ENCODE measurements at regions of chr22 and their contacts with region 1.

Region 1: GRCh38 chr22:26679003-26679629 is 21.7 kb downstream of the MIAT start:
- DNase-seq: peak; percentile 81
- CTCF ChIP-seq: peak; percentile 95

Region 2: DNA sequence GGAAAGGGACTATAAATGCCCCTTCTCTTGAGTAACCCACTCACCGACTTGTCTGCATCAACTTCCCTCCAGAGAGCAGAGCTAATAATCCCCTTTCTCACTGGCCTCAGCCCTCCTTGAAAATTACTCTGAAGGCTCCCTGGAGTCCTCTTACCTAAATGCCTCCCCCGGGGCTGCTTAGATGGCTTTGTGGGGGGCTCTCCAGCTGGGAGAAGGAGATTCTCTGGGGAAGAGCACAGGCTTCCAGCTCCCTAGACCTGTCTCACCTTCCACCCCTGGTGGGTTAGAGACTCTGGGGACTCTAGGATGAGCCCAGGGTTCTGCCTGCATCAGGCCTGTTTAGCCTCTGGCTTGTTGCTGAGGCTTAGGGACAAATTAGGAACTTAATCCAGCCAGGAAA is 18.0 kb after region 1 on chr22:
- CTCF ChIA-PET with region 1: interaction called, 11 read pairs
- POLR2A ChIA-PET with region 1: no interaction called
- DNase-seq: no peak
- CTCF ChIP-seq: no peak

Region 3: GRCh38 chr22:26711205-26711963 is 32.3 kb after region 1 on chr22:
- CTCF ChIA-PET with region 1: interaction called, 10 read pairs
- POLR2A ChIA-PET with region 1: no interaction called
- DNase-seq: peak; percentile 45
- CTCF ChIP-seq: no peak